ENCODE measurements at regions of chr1 and their contacts with region 1.

Region 1: GRCh38 chr1:163875200-163875926 is 553.6 kb downstream of the NUF2 start:
- DNase-seq: peak; percentile 79
- H3K4me3 ChIP-seq: no peak overlapping the region
- H3K27ac ChIP-seq: peak overlapping the region; percentile 82
- H3K4me1 ChIP-seq: peaks cover 24% of the 10 kb centered on the region
- H3K27me3 ChIP-seq: no peaks in the 10 kb centered on the region
- CTCF ChIP-seq: no peak
- POLR2A ChIP-seq: peak; percentile 41

Region 2: DNA sequence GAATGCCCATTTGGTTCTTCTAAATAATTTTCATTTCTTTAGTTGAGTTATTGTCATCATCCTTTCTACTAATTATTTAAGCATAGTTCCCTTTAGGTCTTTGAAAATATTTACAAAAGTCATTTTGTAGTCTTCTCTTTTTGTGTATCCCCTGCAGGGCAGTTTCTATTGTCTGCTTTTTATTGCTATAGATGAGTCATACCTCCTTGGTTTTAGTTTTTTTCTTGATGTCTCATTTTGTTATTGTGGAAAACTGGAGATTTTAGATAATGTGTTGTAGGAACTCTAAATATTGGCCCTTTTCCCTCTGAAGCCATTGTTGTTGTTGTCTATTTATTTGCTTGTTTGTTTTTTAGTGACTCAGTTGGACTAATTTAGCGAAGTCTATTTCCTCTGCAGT is 165.7 kb before region 1 on chr1:
- CTCF ChIA-PET with region 1: no interaction called
- POLR2A ChIA-PET with region 1: no interaction called
- dilution Hi-C with region 1: no loop called
- intact Hi-C with region 1: loop called (anchors 1 kb)
- DNase-seq: peak; percentile 72
- H3K4me3 ChIP-seq: no peak overlapping the region
- H3K27ac ChIP-seq: peak overlapping the region; percentile 34
- H3K4me1 ChIP-seq: peaks cover 33% of the 10 kb centered on the region
- H3K27me3 ChIP-seq: no peaks in the 10 kb centered on the region
- CTCF ChIP-seq: no peak
- POLR2A ChIP-seq: no peak

Region 3: GRCh38 chr1:163820766-163821165 is 54.6 kb before region 1 on chr1:
- CTCF ChIA-PET with region 1: no interaction called
- POLR2A ChIA-PET with region 1: no interaction called
- dilution Hi-C with region 1: no loop called
- intact Hi-C with region 1: loop called (anchors 5 kb)
- DNase-seq: peak; percentile 11
- H3K4me3 ChIP-seq: no peak overlapping the region
- H3K27ac ChIP-seq: no peak overlapping the region
- H3K4me1 ChIP-seq: no peaks in the 10 kb centered on the region
- H3K27me3 ChIP-seq: no peaks in the 10 kb centered on the region
- CTCF ChIP-seq: no peak
- POLR2A ChIP-seq: no peak

Region 4: GRCh38 chr1:163922743-163923201 is 47.4 kb after region 1 on chr1:
- CTCF ChIA-PET with region 1: no interaction called
- POLR2A ChIA-PET with region 1: no interaction called
- dilution Hi-C with region 1: no loop called
- intact Hi-C with region 1: no loop called
- DNase-seq: no peak
- H3K4me3 ChIP-seq: no peak overlapping the region
- H3K27ac ChIP-seq: no peak overlapping the region
- H3K4me1 ChIP-seq: no peaks in the 10 kb centered on the region
- H3K27me3 ChIP-seq: no peaks in the 10 kb centered on the region
- CTCF ChIP-seq: no peak
- POLR2A ChIP-seq: no peak

Measured in endothelial cell of umbilical vein (primary cell).